Activated T-helper 2 cell treated with anti-CD3 and anti-CD28 coated beads, Interferon-gamma antibody, Interleukin-2, Interleukin-4, amounts not matched to agents 10 μg/mL and 5 μg/mL and 100 μg/mL, durations not matched to agents 14 hours and 24 hours and 36 hours (primary cell): ENCODE measurements at regions of chr2 and their contacts with region 1.

Region 1: DNA sequence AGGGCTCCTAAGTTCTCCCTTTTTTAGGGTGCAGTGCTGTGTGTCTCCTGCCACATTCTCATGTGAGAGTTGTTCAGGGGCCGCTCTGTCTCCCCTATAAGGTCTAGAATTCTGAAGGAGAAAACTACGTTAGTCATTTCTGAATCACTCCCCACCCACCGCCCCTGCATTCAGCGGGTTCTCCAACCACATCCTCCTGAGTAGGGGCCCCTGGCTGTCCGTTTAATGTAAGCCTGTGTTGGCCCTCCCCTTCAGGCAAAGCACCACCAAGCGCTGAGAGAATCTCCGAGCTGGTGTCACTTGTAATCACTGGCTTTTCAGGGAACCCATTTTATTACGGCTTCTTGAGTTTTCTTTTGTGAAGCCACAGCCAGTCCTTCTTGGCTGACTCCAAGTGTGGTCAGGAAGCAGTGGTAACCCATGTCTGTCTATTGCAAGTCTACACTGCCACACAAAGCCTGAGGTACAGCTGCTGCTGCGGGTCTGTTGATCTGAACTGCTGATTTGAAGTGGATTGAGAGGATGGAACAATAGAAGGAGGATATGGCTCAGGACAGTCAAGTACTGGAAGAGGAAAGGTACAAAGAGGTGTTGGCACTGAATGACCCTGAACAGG is 16.9 kb downstream of the LCT start:
- DNase-seq: peak; percentile 80
- H3K4me3 Mint-ChIP-seq: peak overlapping the region; percentile 71
- H3K27ac Mint-ChIP-seq: peak overlapping the region; percentile 87
- H3K4me1 Mint-ChIP-seq: peaks cover 39% of the 10 kb centered on the region
- H3K27me3 Mint-ChIP-seq: no peaks in the 10 kb centered on the region

Region 2: GRCh38 chr2:135876066-135876711 is 56.1 kb after region 1 on chr2 and contains the start of gene MCM6:
- intact Hi-C with region 1: loop called (anchors 1 kb)
- DNase-seq: peak; percentile 98
- H3K4me3 Mint-ChIP-seq: peak within 1 kb of the TSS; percentile 95
- H3K27ac Mint-ChIP-seq: peak within 1 kb of the TSS; percentile 92
- H3K4me1 Mint-ChIP-seq: peaks cover 37% of the 10 kb centered on the region
- H3K27me3 Mint-ChIP-seq: no peaks in the 10 kb centered on the region
- total RNA-seq, gene MCM6: 190 and 191 TPM in 2 replicates